ENCODE measurements at regions of chr1 and their contacts with region 1.

Region 1: DNA sequence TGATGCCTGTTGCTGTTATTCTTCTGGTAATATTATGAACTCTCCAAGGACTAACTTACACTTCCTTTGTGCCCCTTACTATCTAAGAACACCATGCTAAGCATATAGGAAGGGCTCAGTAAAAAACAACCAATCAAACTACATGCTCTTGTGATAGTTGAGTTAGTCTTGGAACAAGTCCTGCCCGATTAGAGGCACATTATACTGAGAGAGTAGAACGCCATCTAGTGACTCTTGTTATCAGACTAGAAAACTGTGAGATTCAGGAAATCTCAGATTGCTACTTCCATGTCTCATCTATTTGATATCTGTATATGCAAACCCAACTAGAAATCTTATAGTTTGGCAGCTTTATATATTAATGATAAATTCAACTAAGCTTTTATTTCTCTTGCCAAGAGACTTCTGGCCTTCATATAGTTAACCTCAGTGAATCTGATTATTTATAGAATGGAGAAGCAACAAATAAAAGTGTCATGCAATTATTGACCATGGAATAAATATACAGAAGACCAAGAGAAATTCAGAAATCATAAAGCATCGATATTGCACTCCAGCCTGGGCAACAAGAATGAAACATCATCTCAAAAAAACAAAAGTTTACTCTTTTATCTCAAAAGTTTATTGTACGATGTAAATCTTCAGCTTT is 7.8 kb upstream of the SRRM1 start:
- DNase-seq: no peak
- ATAC-seq: peak; percentile 71 to 80
- H3K4me3 ChIP-seq: no peak overlapping the region
- H3K27ac ChIP-seq: no peak overlapping the region
- H3K4me1 ChIP-seq: no peaks in the 10 kb centered on the region
- H3K27me3 ChIP-seq: no peaks in the 10 kb centered on the region

Region 2: GRCh38 chr1:24201941-24202440 is 433.3 kb before region 1 on chr1:
- intact Hi-C with region 1: loop called in 2 of 4 experiments (anchors 5 to 10 kb)
- DNase-seq: peak; percentile 76 to 88 (median 76)
- ATAC-seq: peak; percentile 82 to 87
- H3K4me3 ChIP-seq: no peak overlapping the region
- H3K27ac ChIP-seq: no peak overlapping the region
- H3K4me1 ChIP-seq: no peaks in the 10 kb centered on the region
- H3K27me3 ChIP-seq: no peaks in the 10 kb centered on the region

Region 3: DNA sequence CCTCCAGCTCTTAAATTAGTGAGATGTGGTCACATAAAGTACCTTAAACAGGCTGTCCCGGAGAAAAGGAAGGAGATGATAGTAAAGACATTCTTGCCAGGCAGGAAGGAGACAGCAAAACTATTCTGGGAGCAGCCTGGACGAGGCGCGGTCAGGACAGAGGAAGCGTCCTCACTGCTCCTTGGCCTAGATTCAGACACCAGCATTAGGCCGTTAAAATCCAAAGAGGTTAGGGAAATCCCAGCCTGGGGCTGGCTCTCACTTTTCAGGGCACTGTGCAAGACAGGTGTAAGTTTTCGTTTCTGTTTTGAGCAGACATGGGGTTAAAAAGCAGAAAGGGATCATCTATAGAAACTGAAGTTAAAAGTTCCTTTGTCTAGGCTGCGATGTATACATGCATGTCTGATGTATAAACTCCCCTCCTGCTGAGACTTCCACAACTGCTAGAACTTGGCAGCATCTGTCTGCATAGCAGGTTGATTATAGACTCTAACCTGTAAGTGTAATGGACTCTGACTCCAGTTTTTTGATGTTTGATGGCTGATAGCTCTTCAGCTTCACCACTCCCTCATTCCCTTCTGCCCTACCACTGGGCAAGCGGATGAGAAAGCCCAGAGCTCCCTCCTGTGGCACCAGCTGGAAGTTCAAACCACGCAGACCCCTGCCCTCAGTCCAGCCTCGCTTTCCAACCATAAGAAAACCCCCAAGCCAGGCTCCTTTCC is 243.3 kb before region 1 on chr1:
- intact Hi-C with region 1: loop called in 1 of 4 experiments (anchors 10 kb)
- DNase-seq: peak; percentile 56 to 82 (median 77)
- ATAC-seq: peak; percentile 80 to 84
- H3K4me3 ChIP-seq: peak overlapping the region; percentile 8
- H3K27ac ChIP-seq: peak overlapping the region; percentile 89
- H3K4me1 ChIP-seq: peaks cover 6% of the 10 kb centered on the region
- H3K27me3 ChIP-seq: no peaks in the 10 kb centered on the region

Region 4: DNA sequence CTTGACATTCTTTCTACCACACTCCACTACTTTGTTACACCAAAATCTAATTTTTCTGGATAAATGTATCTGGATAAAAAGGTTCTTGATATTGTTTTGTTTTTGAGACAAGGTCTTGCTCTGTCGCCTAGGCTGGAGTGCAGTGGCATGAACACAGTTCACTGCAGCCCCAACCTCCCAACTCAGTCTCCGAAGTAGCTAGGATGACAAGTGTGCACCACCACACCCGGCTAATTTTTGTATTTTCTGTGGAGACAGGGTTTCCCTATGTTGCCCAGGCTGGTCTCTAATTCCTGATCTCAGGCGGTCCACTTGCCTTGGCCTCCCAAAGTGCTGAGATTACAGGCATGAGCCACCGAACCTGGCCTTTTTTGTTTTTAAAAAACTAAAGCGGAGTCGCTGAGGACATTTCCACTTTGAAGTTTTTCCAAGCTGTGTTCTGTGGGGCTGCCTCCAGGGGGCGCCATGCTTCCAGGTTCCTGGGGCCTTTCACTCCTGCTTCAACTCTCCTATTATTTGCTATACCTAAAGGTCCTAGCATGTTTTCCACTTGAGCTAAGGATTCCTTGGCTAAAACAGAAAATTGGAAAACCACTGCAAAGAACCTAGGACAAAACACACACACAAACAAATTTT is 93.5 kb before region 1 on chr1:
- intact Hi-C with region 1: loop called in 2 of 4 experiments (anchors 10 kb)
- DNase-seq: peak in 1 of 3 donors; percentile 60
- ATAC-seq: no peak
- H3K4me3 ChIP-seq: no peak overlapping the region
- H3K27ac ChIP-seq: no peak overlapping the region
- H3K4me1 ChIP-seq: no peaks in the 10 kb centered on the region
- H3K27me3 ChIP-seq: no peaks in the 10 kb centered on the region

Region 5: DNA sequence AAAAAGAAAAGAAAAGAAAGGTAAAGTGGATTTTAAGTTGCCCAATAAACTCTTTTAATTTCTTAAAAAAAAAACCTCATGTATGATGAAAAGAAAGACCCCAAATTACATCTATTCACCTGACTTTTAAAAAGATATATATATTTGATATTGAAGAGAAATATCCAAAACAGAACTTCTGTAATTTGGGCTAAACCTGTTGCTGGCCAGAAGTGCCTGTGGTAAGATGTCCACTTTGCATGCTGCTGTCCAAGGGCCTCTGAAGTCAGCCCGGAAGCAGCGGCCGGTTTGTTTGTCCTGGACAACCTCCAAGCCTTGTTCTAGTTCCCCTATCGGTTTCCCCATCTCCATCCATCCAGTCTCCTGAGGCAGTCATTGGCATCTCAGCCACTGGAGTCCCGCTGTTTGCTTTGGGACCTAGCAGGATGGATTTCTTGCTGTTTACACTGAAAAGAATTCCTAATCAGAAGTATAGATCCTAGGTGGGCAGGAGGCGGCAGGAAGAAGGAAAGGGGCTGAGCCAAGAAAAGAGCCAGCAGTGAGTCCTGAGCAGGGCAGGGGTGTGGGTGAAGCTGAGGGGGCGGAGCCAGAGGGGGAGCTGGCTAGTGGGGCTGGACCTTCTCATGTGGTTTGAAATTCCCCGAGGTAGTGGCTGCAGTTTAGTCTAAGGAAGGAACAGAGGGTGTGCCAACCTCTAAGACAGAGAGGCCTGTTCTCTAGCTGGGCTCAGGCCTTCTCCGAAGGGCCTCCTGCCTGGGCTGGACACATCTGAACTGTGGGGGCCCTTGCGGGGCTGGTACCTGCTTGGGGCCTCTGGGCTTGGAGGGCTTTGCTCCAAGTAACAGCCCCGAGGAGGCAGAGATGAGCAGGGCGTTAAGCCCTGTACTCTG is 76.2 kb before region 1 on chr1:
- intact Hi-C with region 1: loop called in 1 of 4 experiments (anchors 10 kb)
- DNase-seq: peak; percentile 35 to 68 (median 63)
- ATAC-seq: peak; percentile 22 to 47
- H3K4me3 ChIP-seq: no peak overlapping the region
- H3K27ac ChIP-seq: no peak overlapping the region
- H3K4me1 ChIP-seq: peaks cover 2% of the 10 kb centered on the region
- H3K27me3 ChIP-seq: no peaks in the 10 kb centered on the region